Sigmoid colon (tissue), 7 donors: ENCODE measurements at regions of chr11 and their contacts with region 1.

Region 1: GRCh38 chr11:124953753-124954589 is at the start of gene CCDC15:
- DNase-seq: peak; percentile 98
- H3K4me3 ChIP-seq: peak within 1 kb of the TSS; percentile 58 to 69 (median 62)
- H3K27ac ChIP-seq: peak within 1 kb of the TSS; percentile 80 to 89 (median 82)
- H3K4me1 ChIP-seq: peaks cover 0 to 13% (median 10%) of the 10 kb centered on the region in 4 donors
- H3K27me3 ChIP-seq: no peaks in the 10 kb centered on the region
- CTCF ChIP-seq: no peak
- EP300 ChIP-seq: peak in 1 of 4 donors; percentile 35
- POLR2A ChIP-seq: peak; percentile 79 to 84
- total RNA-seq, gene CCDC15: 0.41 to 0.99 (median 0.77) TPM

Region 2: GRCh38 chr11:123741159-123742028 is 1212.6 kb before region 1 on chr11 and contains the start of gene ZNF202:
- intact Hi-C with region 1: loop called (anchors 5 kb)
- DNase-seq: peak; percentile 95
- H3K4me3 ChIP-seq: peak within 1 kb of the TSS; percentile 80 to 96 (median 89)
- H3K27ac ChIP-seq: peak within 1 kb of the TSS; percentile 77 to 87 (median 84)
- H3K4me1 ChIP-seq: peaks cover 0 to 29% (median 20%) of the 10 kb centered on the region in 4 donors
- H3K27me3 ChIP-seq: no peaks in the 10 kb centered on the region
- CTCF ChIP-seq: peak in 1 of 4 experiments; percentile 9
- EP300 ChIP-seq: peak in 1 of 4 donors; percentile 6
- POLR2A ChIP-seq: peak; percentile 16 to 42
- total RNA-seq, gene ZNF202: 6.1 to 7.1 (median 6.7) TPM

Region 3: DNA sequence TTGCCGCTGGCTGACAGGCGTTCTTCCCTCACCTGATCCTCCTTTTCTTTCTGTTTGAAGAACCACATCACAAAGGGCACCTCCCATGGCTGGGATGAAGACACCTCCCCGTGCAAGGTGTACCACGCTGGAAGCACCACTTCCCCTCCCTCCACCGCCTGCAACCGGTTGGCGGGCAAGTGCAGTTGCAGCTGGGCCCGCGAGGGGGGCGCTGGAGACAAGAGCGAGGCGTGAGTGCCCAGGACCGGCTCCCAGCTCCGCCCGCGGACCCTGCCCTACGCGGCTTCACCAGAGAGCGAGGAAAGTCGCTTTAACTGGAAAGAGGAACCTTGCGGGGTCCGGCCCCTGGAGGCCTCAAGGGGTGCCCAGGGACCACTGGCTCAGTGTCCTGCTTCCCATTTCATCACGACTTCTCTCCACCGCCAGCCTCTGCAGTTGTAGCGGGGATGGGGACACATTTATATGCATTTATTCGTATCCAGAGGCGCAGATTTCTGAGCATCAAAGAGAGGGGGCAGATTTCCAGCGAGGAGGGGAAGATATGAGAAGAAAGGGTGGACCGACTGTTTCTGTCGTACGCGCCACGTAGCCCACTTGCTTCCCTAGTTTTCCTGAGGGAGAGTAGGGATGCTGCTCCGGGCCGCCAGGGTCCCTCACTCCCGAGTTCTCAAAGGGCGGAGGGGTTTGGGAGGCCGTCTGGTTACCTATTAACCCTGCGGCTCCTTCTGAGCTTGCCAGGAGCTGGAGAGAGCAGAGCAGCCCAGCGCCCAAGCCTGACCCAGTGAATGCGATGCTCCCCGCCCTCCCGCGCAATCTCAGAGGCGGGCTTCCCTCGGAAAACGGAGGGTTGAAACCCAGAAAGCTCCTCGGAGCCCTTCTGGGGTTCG is 195.4 kb before region 1 on chr11:
- intact Hi-C with region 1: loop called (anchors 10 kb)
- DNase-seq: peak; percentile 82
- H3K4me3 ChIP-seq: peak overlapping the region in 3 of 4 donors; percentile 25 to 44 (median 41)
- H3K27ac ChIP-seq: peak overlapping the region; percentile 17 to 76 (median 52)
- H3K4me1 ChIP-seq: peaks cover 0 to 47% (median 44%) of the 10 kb centered on the region in 4 donors
- H3K27me3 ChIP-seq: peaks cover 47 to 96% (median 72%) of the 10 kb centered on the region in 3 donors
- CTCF ChIP-seq: peak; percentile 31 to 75 (median 64)
- EP300 ChIP-seq: no peak
- POLR2A ChIP-seq: no peak

Region 4: DNA sequence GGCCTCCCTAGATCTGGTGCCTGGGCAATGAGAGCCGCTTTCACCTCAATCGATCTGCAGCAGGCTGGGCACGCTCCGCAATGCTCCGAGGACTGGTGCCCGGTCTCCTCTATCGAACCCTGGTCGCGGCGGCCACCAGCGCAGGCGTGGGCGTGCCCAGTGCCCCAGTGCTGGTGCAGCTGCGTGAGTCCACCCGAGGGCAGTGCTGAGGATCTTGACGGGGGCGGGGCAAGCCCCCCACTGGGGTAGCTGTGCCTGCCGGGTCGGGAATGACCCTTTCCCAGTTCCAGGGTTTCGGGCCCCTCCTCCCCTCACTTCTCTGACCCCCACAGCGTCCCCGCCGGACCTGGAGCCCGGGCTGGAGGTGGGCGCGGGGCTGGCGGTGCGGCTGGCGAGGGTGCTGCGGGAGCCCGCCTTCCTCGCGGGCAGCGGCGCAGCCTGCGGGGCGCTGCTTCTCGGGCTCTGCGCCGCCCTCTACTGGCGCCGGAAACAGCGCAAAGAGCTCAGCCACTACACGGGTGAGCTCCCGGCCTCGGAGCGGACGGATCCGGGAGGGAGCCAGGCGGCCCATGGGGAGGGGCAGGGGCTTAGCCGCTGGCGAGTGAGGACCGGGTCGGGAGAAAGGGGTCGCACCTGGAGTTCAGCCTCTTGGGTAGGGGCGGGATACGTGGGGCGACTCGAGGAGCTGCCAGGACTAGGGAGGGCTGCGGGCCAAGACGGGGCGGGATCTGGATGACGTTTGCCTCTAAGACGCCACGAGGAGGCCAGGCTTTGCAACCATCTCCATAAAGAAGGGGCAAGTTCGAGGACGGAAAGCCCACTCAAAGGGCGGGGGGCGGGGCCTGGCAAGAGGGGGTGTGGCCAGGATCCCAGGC is 77.8 kb before region 1 on chr11:
- intact Hi-C with region 1: loop called (anchors 2 kb)
- DNase-seq: peak; percentile 95
- H3K4me3 ChIP-seq: peak overlapping the region; percentile 47 to 66 (median 54)
- H3K27ac ChIP-seq: peak overlapping the region; percentile 88 to 92 (median 90)
- H3K4me1 ChIP-seq: peaks cover 0 to 21% (median 12%) of the 10 kb centered on the region in 4 donors
- H3K27me3 ChIP-seq: peaks cover 0 to 29% (median 21%) of the 10 kb centered on the region in 3 donors
- CTCF ChIP-seq: peak; percentile 44 to 71 (median 49)
- EP300 ChIP-seq: peak in 1 of 4 donors; percentile 28
- POLR2A ChIP-seq: no peak

Region 5: GRCh38 chr11:124917115-124917637 is 36.8 kb before region 1 on chr11:
- intact Hi-C with region 1: no loop called
- DNase-seq: no peak
- H3K4me3 ChIP-seq: no peak overlapping the region
- H3K27ac ChIP-seq: no peak overlapping the region
- H3K4me1 ChIP-seq: peaks cover 0 to 11% (median 6%) of the 10 kb centered on the region in 4 donors
- H3K27me3 ChIP-seq: peaks cover 5 to 12% (median 6%) of the 10 kb centered on the region in 3 donors
- CTCF ChIP-seq: no peak
- EP300 ChIP-seq: no peak
- POLR2A ChIP-seq: no peak

Region 6: GRCh38 chr11:125345421-125346178 is 391.6 kb after region 1 on chr11:
- intact Hi-C with region 1: loop called (anchors 5 kb)
- DNase-seq: peak; percentile 92
- H3K4me3 ChIP-seq: no peak overlapping the region
- H3K27ac ChIP-seq: peak overlapping the region; percentile 59 to 65 (median 60)
- H3K4me1 ChIP-seq: peaks cover 0 to 22% (median 19%) of the 10 kb centered on the region in 4 donors
- H3K27me3 ChIP-seq: no peaks in the 10 kb centered on the region
- CTCF ChIP-seq: peak; percentile 71 to 96 (median 84)
- EP300 ChIP-seq: no peak
- POLR2A ChIP-seq: no peak

Region 7: GRCh38 chr11:125874556-125875124 is 920.7 kb after region 1 on chr11:
- intact Hi-C with region 1: loop called (anchors 10 kb)
- DNase-seq: peak; percentile 69
- H3K4me3 ChIP-seq: no peak overlapping the region
- H3K27ac ChIP-seq: no peak overlapping the region
- H3K4me1 ChIP-seq: no peaks in the 10 kb centered on the region
- H3K27me3 ChIP-seq: no peaks in the 10 kb centered on the region
- CTCF ChIP-seq: peak; percentile 60 to 74 (median 65)
- EP300 ChIP-seq: no peak
- POLR2A ChIP-seq: no peak